Activated naive CD4-positive, alpha-beta T cell treated with anti-CD3 and anti-CD28 coated beads for 36 hours (primary cell): ENCODE measurements at regions of chr16 and their contacts with region 1.

Region 1: DNA sequence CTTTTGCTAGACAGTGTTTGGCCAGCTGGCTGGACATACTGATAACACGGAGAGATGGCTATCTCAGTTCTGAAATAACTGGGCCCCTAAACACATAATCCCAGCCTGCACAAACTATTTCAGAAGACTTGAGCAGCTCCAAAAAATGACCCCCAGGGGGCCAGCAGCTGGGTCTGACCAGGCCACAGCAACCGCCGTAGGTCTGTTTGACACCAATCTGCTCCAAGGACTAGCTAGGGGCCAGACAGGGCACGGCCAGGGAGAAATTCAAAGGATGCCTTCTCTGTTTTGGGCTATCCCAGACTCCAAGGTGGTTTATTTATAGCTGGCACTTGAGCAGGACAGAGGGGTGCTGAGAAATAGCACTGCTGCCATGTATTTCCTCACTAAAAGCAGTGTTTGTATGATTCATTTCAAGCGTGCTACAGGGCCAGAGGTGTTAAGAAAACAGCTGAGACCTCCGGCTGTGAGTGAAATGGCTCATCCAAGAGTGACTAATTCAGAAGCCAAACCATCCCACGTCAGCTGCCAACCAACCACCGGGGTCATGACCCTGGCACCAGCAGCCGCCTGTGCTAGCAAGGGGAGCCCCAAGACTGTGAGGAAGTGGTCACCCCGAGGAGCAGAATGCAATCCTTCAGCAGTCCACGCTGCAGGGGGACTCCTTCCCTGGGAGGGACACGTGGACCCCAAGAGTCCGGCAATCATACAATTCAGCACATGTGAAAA is 5.7 kb downstream of the GGA2 start:
- DNase-seq: peak; percentile 91
- H3K4me3 Mint-ChIP-seq: no peak overlapping the region
- H3K27ac Mint-ChIP-seq: no peak overlapping the region
- H3K4me1 Mint-ChIP-seq: peaks cover 67% of the 10 kb centered on the region
- H3K27me3 Mint-ChIP-seq: no peaks in the 10 kb centered on the region

Region 2: GRCh38 chr16:23452572-23453337 is 51.9 kb before region 1 on chr16 and contains the start of gene COG7:
- CTCF ChIA-PET with region 1: interaction called, 5 read pairs
- intact Hi-C with region 1: loop called (anchors 2 kb)
- DNase-seq: peak; percentile 89
- H3K4me3 Mint-ChIP-seq: peak within 1 kb of the TSS; percentile 97
- H3K27ac Mint-ChIP-seq: peak within 1 kb of the TSS; percentile 86
- H3K4me1 Mint-ChIP-seq: peaks cover 34% of the 10 kb centered on the region
- H3K27me3 Mint-ChIP-seq: no peaks in the 10 kb centered on the region
- total RNA-seq, gene COG7: 16.4 to 16.9 TPM

Region 3: GRCh38 chr16:23570992-23571632 is 66.5 kb after region 1 on chr16:
- CTCF ChIA-PET with region 1: no interaction called
- intact Hi-C with region 1: no loop called
- DNase-seq: no peak
- H3K4me3 Mint-ChIP-seq: no peak overlapping the region
- H3K27ac Mint-ChIP-seq: no peak overlapping the region
- H3K4me1 Mint-ChIP-seq: no peaks in the 10 kb centered on the region
- H3K27me3 Mint-ChIP-seq: no peaks in the 10 kb centered on the region

Region 4: DNA sequence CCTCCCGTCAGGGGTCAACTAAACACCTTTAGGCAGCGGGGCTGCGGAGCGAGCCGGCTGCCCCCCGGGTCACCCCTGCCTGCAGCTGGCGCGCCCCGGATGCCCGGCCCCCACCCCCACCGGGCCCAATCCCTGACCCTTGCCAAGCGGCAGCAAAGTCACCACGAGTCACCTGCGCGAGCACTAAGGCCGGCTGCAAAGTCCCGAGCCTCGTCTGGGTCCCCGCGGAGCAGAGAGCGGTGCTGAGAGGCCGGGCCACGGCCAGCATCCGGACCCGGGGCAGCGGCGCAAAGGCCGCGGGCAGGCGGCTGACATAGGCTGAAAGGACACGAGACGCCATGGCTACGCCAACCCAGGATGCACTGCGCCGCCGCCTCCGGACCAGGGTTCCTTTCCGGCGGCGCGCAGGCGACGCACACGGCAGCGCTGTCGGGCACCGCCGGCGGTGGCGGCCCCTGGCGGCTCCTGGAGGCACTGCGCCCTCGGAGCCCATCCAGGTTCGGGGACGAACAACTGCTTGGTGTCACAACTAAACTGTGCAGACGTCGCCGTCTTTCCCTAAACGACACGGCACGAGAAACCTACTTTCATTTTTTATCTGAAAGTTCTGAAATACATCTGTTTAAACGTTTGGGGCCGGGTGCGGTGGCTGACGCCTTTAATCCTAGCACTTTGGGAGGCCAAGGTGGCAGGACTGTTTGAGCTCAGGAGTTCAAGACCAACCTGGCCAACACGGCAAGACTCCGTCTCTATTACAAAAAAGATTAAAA is 91.5 kb after region 1 on chr16 and contains the start of gene NDUFAB1:
- CTCF ChIA-PET with region 1: no interaction called
- intact Hi-C with region 1: loop called (anchors 5 kb)
- DNase-seq: peak; percentile 93
- H3K4me3 Mint-ChIP-seq: peak within 1 kb of the TSS; percentile 79
- H3K27ac Mint-ChIP-seq: peak within 1 kb of the TSS; percentile 76
- H3K4me1 Mint-ChIP-seq: peaks cover 39% of the 10 kb centered on the region
- H3K27me3 Mint-ChIP-seq: no peaks in the 10 kb centered on the region
- total RNA-seq, gene NDUFAB1: 163 to 170 TPM

Region 5: GRCh38 chr16:23651943-23652468 is 147.4 kb after region 1 on chr16:
- CTCF ChIA-PET with region 1: no interaction called
- intact Hi-C with region 1: loop called (anchors 2 kb)
- DNase-seq: no peak
- H3K4me3 Mint-ChIP-seq: no peak overlapping the region
- H3K27ac Mint-ChIP-seq: peak overlapping the region; percentile 82
- H3K4me1 Mint-ChIP-seq: peaks cover 29% of the 10 kb centered on the region
- H3K27me3 Mint-ChIP-seq: no peaks in the 10 kb centered on the region